ENCODE measurements at regions of chr11 and their contacts with region 1.

Region 1: GRCh38 chr11:62421996-62422395 is 3.2 kb downstream of the SCGB1A1 start:
- DNase-seq: no peak
- H3K4me3 ChIP-seq: no peak overlapping the region
- H3K27ac ChIP-seq: no peak overlapping the region
- H3K4me1 ChIP-seq: peaks cover 4 to 12% of the 10 kb centered on the region in 2 experiments; a peak in 3 of 4 replicates
- H3K27me3 ChIP-seq: no peaks in the 10 kb centered on the region
- CTCF ChIP-seq: no peak
- EP300 ChIP-seq: no peak
- RAD21 ChIP-seq: no peak

Region 2: GRCh38 chr11:62400760-62401159 is 21.2 kb before region 1 on chr11:
- CTCF ChIA-PET with region 1: interaction called, 39 read pairs
- POLR2A ChIA-PET with region 1: interaction called, 3 read pairs
- DNase-seq: peak; percentile 93
- H3K4me3 ChIP-seq: no peak overlapping the region
- H3K27ac ChIP-seq: peak overlapping the region; percentile 52 to 85; a peak in 3 of 4 replicates
- H3K4me1 ChIP-seq: peaks cover 29 to 52% of the 10 kb centered on the region in 2 experiments; a peak in 3 of 4 replicates
- H3K27me3 ChIP-seq: no peaks in the 10 kb centered on the region
- CTCF ChIP-seq: no peak
- EP300 ChIP-seq: peak; percentile 86 to 90; a peak in 3 of 4 replicates
- RAD21 ChIP-seq: peak; percentile 32

Region 3: GRCh38 chr11:62411524-62411923 is 10.5 kb before region 1 on chr11:
- CTCF ChIA-PET with region 1: interaction called, 29 read pairs
- POLR2A ChIA-PET with region 1: no interaction called
- DNase-seq: no peak
- H3K4me3 ChIP-seq: no peak overlapping the region
- H3K27ac ChIP-seq: no peak overlapping the region; a peak in 1 of 4 replicates
- H3K4me1 ChIP-seq: peaks cover 0 to 22% of the 10 kb centered on the region in 2 experiments; a peak in 1 of 4 replicates
- H3K27me3 ChIP-seq: no peaks in the 10 kb centered on the region
- CTCF ChIP-seq: no peak
- EP300 ChIP-seq: no peak
- RAD21 ChIP-seq: no peak

Region 4: DNA sequence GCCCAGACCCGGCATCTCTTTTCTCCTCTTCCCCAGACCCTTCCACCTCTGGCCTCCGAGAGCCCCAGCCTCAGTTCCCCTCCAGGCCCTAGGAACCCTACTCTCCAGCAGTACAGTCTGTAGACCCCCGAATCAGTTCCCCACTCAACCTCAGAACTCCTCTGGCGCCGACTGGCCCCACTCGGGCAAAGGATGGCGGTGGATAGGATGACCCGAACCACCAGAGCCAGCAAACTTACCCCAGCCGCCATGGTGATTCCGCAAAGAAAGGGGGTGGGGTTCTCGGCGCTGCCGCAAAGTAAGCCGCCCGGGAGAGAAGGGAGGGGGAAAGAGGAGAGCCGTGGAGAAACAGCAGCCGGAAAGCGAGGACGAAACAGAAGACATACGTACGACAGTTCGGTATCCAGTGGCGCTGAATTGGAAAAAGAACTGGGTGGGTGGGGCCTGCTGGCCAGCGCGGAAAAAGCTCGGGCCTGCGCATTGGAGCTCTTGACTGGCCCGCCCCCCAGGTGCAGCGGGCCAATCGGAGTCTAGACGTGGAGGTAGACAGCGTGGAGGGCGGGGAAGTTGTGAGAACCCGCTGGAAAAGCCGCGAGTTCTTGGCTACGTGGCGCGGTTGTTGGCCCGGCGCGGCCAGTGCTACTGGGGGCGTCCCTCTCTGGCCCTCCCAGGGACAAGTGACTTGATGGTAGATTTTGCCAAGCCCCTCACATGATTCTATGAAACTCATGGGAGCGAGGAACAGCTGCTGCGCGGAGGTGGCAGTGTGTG is 151.8 kb after region 1 on chr11 and contains the start of gene EEF1G:
- CTCF ChIA-PET with region 1: interaction called, 14 read pairs
- POLR2A ChIA-PET with region 1: interaction called, 3 read pairs
- DNase-seq: peak; percentile 99
- H3K4me3 ChIP-seq: peak within 1 kb of the TSS; percentile 83 to 93
- H3K27ac ChIP-seq: peak within 1 kb of the TSS; percentile 83 to 87
- H3K4me1 ChIP-seq: peaks cover 19 to 28% of the 10 kb centered on the region in 2 experiments; a peak in 3 of 4 replicates
- H3K27me3 ChIP-seq: no peaks in the 10 kb centered on the region
- CTCF ChIP-seq: no peak
- EP300 ChIP-seq: peak; percentile 15 to 41; a peak in 2 of 4 replicates
- RAD21 ChIP-seq: no peak
- polyA plus RNA-seq, gene EEF1G: 1,853 and 2,105 TPM in 2 replicates